Stomach (tissue), 19 donors: ENCODE measurements at regions of chr19 and their contacts with region 1.

Region 1: GRCh38 chr19:5803752-5804515 is 933 bp upstream of the NRTN start:
- DNase-seq: peak; percentile 95 to 98
- H3K4me3 ChIP-seq: peak overlapping the region; percentile 44 to 63 (median 52)
- H3K27ac ChIP-seq: peak overlapping the region; percentile 46 to 88 (median 69)
- H3K4me1 ChIP-seq: peaks cover 39 to 69% (median 67%) of the 10 kb centered on the region in 4 donors
- H3K27me3 ChIP-seq: peaks cover 0 to 68% (median 24%) of the 10 kb centered on the region in 3 donors
- CTCF ChIP-seq: peak in 5 of 7 experiments; percentile 86 to 94 (median 90)
- EP300 ChIP-seq: no peak
- POLR2A ChIP-seq: no peak

Region 2: DNA sequence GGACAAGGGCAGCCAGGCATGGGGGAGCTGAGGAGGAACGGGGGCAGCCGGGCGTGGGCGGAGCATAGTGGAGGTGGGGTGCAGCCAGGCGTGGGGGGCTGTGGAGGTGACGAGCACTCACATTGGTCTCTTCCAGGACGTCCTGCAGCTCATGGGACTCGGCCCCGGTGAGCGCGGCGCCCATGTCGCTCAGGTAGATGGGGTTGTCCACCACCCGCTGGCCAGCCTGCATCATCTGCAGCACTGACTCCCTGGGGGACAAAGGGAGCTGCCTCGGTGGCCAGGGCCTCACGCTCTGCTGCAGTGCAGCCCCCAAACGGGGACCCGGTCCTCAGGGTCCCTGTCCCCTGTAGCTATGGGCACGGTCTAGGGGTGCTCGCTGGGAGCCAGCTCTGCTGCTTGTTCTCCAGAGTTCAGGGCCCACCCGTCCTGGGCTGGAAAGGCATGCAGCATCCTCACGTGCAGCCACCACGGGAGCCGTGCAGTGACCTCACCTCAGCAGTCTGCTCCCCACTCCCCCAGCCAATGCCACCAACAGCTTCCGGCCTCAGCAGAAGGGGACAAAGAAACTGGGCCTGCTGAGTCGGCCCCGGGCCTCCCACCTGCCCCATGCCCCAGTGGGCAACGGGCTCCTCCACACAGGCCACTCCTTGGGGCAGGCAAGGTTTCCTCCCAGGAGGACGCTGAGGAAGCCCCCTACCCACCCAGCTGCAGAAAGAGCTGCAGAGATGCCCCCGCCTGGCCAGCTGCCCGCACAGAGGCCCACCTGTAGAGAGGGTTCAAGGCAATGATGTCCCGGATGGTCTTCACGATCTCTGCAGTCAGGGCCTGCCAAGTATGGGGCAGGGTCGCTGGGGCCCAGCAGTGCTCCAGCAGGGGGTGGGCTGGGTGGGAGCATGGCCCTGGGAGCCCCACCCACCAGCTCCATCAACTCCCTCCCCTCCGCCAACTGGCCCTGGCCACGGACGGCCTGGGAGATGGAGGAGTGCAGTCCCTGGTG is 96.1 kb before region 1 on chr19:
- intact Hi-C with region 1: no loop called
- DNase-seq: no peak
- H3K4me3 ChIP-seq: no peak overlapping the region
- H3K27ac ChIP-seq: no peak overlapping the region
- H3K4me1 ChIP-seq: no peaks in the 10 kb centered on the region
- H3K27me3 ChIP-seq: no peaks in the 10 kb centered on the region
- CTCF ChIP-seq: no peak
- EP300 ChIP-seq: no peak
- POLR2A ChIP-seq: no peak

Region 3: DNA sequence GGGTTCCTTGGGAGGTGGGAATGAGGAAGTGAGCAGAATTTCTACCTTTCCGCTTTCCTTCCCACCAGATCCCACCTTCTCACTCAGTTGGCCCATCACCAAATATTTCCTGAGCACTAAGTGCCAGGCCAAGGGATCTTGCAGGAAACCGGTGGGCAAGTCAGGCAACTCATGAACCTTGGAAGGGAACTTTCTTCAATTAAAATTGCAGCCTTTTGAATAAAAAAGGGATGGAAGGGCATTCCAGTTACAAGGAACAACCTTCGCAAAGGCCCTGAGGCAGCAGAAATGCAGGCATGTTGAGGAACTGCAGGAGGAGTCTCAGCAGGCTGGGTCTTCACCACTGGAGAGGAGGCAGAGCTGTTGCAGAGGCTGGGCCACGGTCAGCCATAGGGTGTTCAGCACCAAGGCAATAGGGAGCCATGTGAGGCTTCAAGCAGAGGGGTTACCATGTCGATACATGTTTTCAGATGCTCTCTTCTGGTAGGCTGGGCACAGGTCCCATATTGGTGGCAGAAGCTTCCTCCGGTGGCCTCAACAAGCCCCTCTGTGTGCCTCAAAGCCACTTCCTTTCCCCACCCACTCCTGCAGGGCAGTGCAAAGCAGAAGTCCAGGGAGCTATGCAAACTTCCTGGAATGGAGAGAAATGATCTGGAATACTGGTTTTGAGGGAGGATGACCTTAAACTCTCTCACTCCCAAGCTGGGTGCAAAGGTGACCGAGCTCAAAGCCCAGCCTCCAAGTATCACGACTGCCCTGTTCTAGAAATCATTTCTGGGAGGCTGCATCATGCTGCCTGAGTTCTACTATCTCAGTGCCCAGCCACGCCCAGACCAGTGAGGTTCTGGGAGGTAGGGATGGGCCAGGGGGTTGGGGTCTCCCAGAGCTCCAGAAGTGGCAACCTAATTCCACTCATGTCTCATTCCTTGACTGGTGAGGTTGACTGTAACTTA is 35.4 kb after region 1 on chr19 and contains the start of gene FUT6:
- intact Hi-C with region 1: no loop called
- DNase-seq: no peak
- H3K4me3 ChIP-seq: no peak within 1 kb of the TSS
- H3K27ac ChIP-seq: no peak within 1 kb of the TSS
- H3K4me1 ChIP-seq: no peaks in the 10 kb centered on the region
- H3K27me3 ChIP-seq: no peaks in the 10 kb centered on the region
- CTCF ChIP-seq: no peak
- EP300 ChIP-seq: no peak
- POLR2A ChIP-seq: no peak
- total RNA-seq, gene FUT6: 0.18 to 105 TPM in 2 of 5 donors, not detected in the others

Region 4: DNA sequence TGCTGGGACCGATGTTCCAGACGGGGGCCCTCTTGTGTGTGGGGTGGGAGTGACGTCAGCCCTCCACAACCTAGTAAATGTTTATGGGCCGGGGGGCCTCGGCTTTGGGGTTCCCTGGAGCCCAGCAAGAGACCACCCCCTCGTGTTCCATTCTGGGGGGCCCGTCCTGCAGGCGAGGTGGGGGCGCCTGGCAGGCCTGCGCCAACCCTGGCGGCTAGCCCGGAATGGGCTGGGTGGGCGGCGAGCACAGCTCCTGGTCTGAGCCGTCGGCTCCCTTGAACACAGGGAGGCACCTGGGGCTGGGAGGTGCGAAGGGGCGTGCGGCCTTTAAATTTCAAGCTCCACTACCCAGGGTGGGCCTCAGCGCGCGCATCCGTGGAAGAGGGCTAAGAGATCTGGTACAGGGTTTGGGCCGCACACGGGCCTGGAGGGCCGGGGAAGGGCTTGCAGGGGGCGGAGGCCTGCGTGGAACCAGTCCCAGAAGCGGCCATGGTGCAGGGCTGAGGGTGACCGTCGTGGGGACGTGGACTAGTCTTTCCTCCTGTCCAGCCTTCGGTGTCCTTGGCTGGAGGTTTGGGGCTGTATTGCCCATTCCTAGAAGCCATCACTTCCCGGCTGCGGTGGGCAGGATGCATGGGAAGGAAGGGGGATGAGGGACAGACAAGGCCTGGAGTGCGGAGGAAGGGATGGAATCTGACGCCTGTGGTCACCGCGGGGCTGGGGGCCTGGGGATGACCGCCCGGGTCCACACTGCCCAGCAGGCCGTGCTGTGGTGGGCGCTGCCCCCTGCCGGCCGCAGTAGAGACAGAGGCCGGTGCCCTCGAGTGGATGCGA is 88.2 kb after region 1 on chr19:
- intact Hi-C with region 1: loop called (anchors 10 kb)
- DNase-seq: peak; percentile 33 to 79
- H3K4me3 ChIP-seq: no peak overlapping the region
- H3K27ac ChIP-seq: peak overlapping the region in 1 of 5 donors; percentile 77
- H3K4me1 ChIP-seq: peaks cover 16 to 58% (median 32%) of the 10 kb centered on the region in 4 donors
- H3K27me3 ChIP-seq: peaks cover 0 to 29% (median 14%) of the 10 kb centered on the region in 3 donors
- CTCF ChIP-seq: peak in 5 of 7 experiments; percentile 30 to 57 (median 53)
- EP300 ChIP-seq: no peak
- POLR2A ChIP-seq: no peak